Calu3 (cell line): ENCODE measurements at regions of chr4 and their contacts with region 1.

Region 1: DNA sequence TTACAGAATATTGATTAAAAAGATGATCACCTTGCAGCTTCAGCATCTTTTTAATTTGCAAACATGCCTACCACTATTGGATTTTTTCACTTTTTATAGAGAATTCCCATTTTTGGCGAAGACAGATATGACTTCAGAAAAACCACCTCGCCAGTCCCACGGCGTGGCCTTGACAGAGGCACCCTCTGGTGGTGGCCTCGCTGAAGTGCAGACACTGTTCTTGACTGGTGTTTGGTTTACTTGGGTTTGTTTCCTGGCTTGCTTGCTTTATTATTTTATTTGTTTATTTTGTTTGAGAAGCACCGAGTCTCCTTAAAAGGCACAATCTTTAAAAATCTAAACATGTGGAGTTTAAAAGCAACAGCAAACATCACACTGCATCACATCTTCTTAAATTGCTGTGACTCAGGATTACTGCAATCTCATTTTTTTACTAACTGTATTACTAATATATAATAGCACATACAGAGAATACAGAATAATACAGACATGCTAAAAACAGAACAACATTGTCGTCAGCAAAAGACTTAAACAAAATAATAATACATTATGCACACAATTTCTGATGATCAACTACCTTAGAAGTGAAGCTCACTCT is 13.1 kb upstream of the AMTN start:
- DNase-seq: peak; percentile 65
- H3K4me3 Mint-ChIP-seq: no peak overlapping the region
- H3K27ac Mint-ChIP-seq: no peak overlapping the region
- H3K4me1 Mint-ChIP-seq: no peaks in the 10 kb centered on the region
- H3K27me3 Mint-ChIP-seq: no peaks in the 10 kb centered on the region
- CTCF ChIP-seq: peak; percentile 80

Region 2: DNA sequence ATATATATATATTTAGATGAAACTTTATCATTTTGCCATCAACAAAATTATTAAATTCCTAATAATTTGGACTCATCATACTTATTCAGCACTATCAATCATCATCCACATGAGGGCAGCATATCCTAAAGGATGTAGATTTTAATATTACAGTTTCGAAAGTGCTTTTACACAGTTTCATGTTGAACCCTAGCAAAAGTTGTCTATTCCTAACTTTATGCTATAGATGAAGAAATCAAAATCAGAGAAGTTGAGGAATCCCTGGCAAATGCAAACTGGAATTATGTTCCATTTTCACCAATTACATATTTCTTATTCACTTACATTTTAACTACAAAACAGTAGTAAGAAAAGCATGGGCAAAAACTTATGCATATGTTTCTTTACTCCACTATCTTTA is 815.7 kb before region 1 on chr4:
- CTCF ChIA-PET with region 1: no interaction called
- intact Hi-C with region 1: loop called (anchors 5 kb)
- DNase-seq: peak; percentile 9
- H3K4me3 Mint-ChIP-seq: no peak overlapping the region
- H3K27ac Mint-ChIP-seq: no peak overlapping the region
- H3K4me1 Mint-ChIP-seq: peaks cover 6% of the 10 kb centered on the region
- H3K27me3 Mint-ChIP-seq: no peaks in the 10 kb centered on the region
- CTCF ChIP-seq: peak; percentile 28

Region 3: GRCh38 chr4:69816236-69816635 is 689.0 kb before region 1 on chr4:
- CTCF ChIA-PET with region 1: no interaction called
- intact Hi-C with region 1: no loop called
- DNase-seq: no peak
- H3K4me3 Mint-ChIP-seq: no peak overlapping the region
- H3K27ac Mint-ChIP-seq: no peak overlapping the region
- H3K4me1 Mint-ChIP-seq: no peaks in the 10 kb centered on the region
- H3K27me3 Mint-ChIP-seq: no peaks in the 10 kb centered on the region
- CTCF ChIP-seq: no peak

Region 4: DNA sequence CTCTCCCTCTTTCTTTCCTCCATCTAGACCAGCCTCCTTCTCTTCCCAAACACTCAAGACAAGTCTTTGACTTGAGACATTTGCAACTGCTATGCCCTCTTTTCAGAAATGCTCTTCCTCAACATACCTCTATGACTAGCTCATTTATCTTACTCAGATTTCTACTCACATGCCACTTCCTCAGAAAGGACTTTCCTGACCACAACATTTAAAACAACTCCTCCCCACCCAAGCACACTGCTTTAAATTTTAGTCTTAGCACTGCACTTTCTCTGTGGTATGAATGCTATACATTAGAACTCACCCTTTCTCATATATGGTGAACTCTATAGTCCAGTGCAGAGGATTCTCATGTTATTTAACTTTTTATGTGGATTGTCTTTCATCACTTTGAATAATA is 616.9 kb before region 1 on chr4:
- CTCF ChIA-PET with region 1: no interaction called
- intact Hi-C with region 1: loop called (anchors 2 kb)
- DNase-seq: no peak
- H3K4me3 Mint-ChIP-seq: no peak overlapping the region
- H3K27ac Mint-ChIP-seq: no peak overlapping the region
- H3K4me1 Mint-ChIP-seq: peaks cover 9% of the 10 kb centered on the region
- H3K27me3 Mint-ChIP-seq: no peaks in the 10 kb centered on the region
- CTCF ChIP-seq: no peak

Region 5: DNA sequence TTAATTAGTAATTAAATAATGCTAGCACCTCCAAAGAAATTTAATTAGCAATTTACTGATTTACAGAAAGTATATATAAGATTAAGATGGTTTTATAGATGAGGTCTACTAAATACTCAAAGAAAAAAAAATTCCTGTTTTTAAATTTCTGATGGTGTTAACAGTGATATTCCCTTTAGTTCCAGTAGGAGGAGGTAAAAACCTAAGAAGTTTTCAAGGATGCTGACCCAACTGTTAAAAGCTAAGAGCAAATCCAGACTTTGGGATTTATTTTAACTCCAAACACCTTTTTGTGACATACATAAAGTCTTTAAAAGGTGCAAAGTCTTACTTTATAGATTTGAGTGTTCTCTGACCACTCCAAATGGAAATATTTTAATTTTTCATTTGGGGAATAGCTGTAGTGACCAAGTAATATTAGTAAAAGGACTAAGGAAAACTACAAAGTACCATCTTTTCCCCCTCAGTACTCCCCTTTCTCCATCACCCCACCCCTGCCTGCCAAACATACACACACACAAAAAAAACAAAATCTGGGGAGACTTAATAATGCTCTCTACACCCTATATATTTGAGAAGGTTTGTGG is 608.6 kb before region 1 on chr4:
- CTCF ChIA-PET with region 1: no interaction called
- intact Hi-C with region 1: loop called (anchors 2 kb)
- DNase-seq: no peak
- H3K4me3 Mint-ChIP-seq: no peak overlapping the region
- H3K27ac Mint-ChIP-seq: no peak overlapping the region
- H3K4me1 Mint-ChIP-seq: peaks cover 23% of the 10 kb centered on the region
- H3K27me3 Mint-ChIP-seq: no peaks in the 10 kb centered on the region
- CTCF ChIP-seq: no peak

Region 6: GRCh38 chr4:70269674-70270073 is 235.6 kb before region 1 on chr4:
- CTCF ChIA-PET with region 1: no interaction called
- intact Hi-C with region 1: loop called (anchors 10 kb)
- DNase-seq: no peak
- H3K4me3 Mint-ChIP-seq: no peak overlapping the region
- H3K27ac Mint-ChIP-seq: no peak overlapping the region
- H3K4me1 Mint-ChIP-seq: peaks cover 8% of the 10 kb centered on the region
- H3K27me3 Mint-ChIP-seq: no peaks in the 10 kb centered on the region
- CTCF ChIP-seq: no peak

Region 7: GRCh38 chr4:70315928-70316327 is 189.3 kb before region 1 on chr4:
- CTCF ChIA-PET with region 1: no interaction called
- intact Hi-C with region 1: loop called (anchors 2 kb)
- DNase-seq: no peak
- H3K4me3 Mint-ChIP-seq: no peak overlapping the region
- H3K27ac Mint-ChIP-seq: no peak overlapping the region
- H3K4me1 Mint-ChIP-seq: no peaks in the 10 kb centered on the region
- H3K27me3 Mint-ChIP-seq: no peaks in the 10 kb centered on the region
- CTCF ChIP-seq: no peak

Region 8: DNA sequence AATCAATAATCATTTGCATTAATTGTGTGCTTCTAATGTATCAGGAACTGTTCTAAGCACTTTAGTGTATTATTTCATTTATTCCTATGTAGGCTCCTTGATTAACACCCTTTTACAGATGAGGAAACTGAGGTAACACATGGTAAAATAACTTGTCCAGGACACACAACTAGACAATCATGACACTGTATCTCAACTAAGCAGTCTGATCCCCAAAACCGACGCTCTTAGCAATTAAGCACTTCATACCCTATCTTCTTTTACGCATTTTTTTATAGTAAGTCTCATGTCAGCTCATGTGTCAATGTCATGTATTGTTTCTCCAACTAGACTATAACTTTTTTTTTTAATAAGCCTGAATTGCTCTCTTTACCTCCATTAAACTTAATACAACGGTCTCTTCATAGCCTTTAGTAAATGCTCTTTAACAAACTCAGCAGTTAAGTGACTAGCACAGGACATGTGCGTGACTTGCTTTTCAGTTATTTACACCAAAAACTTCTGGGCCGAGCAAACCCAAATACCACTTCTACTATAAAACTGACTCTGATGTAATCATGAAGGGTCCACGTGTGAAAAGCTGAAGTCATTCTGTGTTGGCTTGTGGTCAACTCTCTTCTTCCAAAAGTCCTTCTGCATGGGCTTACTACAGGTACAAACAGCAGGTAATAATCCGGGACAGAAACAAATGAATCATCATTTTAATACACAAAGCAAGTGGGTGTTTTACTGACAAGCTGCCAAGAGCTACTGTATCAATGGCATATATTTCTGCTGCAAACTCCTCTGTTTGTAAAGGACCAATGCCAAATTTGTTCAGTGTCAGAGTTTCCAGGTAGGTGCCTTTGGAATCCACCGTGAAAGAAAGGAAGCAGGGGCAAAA is 78.9 kb after region 1 on chr4:
- CTCF ChIA-PET with region 1: no interaction called
- intact Hi-C with region 1: no loop called
- DNase-seq: peak; percentile 53
- H3K4me3 Mint-ChIP-seq: no peak overlapping the region
- H3K27ac Mint-ChIP-seq: peak overlapping the region; percentile 53
- H3K4me1 Mint-ChIP-seq: peaks cover 10% of the 10 kb centered on the region
- H3K27me3 Mint-ChIP-seq: no peaks in the 10 kb centered on the region
- CTCF ChIP-seq: no peak